MCF 10A (cell line): ENCODE measurements at regions of chr6 and their contacts with region 1.

Region 1: GRCh38 chr6:160950507-160950906 is 41.1 kb upstream of the MAP3K4 start:
- DNase-seq: peak; percentile 76
- H3K4me3 Mint-ChIP-seq: peak overlapping the region; percentile 40
- H3K27ac Mint-ChIP-seq: peak overlapping the region; percentile 88
- H3K4me1 Mint-ChIP-seq: peaks cover 27% of the 10 kb centered on the region
- H3K27me3 Mint-ChIP-seq: peaks cover under 1% of the 10 kb centered on the region
- CTCF ChIP-seq: no peak

Region 2: DNA sequence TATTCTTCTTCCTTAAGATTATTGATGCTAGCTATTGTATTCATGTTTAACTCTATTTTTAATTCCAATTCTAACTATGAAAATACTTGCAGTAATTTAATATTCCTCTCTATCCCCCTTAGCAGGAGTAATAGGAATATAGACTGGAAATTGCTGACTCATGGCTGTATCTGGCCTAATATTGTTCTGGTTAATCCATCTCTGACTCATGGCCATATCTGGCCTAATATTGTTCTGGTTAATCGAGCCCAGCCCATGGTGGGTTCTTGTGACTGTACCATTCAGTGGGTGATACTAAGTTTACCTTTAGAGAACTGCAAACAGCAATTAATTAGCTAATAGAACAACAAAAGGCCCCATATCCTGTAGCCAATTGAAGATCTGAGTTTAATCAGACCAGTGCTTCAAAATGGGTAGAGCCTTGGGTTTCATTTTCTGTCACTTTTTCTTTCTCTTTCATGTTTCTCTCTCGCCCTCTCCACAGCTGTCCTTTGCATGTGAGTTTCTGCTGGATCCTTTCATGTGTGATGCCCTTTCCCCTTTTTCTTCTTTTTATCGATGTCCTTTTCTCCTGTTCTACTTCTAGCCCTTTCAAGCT is 551.7 kb before region 1 on chr6:
- CTCF ChIA-PET with region 1: no interaction called
- POLR2A ChIA-PET with region 1: no interaction called
- intact Hi-C with region 1: no loop called
- DNase-seq: no peak
- H3K4me3 Mint-ChIP-seq: no peak overlapping the region
- H3K27ac Mint-ChIP-seq: no peak overlapping the region
- H3K4me1 Mint-ChIP-seq: peaks cover 25% of the 10 kb centered on the region
- H3K27me3 Mint-ChIP-seq: no peaks in the 10 kb centered on the region
- CTCF ChIP-seq: no peak

Region 3: DNA sequence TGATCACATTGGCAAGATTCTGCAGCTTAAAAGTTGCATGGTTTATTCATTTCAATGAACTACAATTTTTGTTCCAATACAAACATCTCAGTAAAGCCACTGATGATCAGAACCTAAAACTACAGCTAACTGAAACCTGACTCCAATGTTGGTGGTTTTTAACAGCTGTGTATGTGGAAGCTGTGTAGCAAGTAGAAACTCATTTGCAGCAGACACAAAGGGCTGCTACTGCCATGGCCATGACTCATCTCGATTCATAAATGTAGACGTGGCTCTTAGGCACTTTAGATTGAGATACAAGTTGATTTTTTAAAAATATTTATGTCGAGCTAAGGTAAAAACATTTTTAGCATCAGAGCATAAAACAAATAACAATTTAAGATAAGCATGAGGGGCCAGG is 21.6 kb after region 1 on chr6:
- CTCF ChIA-PET with region 1: interaction called, 4 read pairs
- POLR2A ChIA-PET with region 1: interaction called, 27 read pairs
- intact Hi-C with region 1: no loop called
- DNase-seq: peak; percentile 75
- H3K4me3 Mint-ChIP-seq: no peak overlapping the region
- H3K27ac Mint-ChIP-seq: no peak overlapping the region
- H3K4me1 Mint-ChIP-seq: peaks cover 17% of the 10 kb centered on the region
- H3K27me3 Mint-ChIP-seq: no peaks in the 10 kb centered on the region
- CTCF ChIP-seq: no peak

Region 4: DNA sequence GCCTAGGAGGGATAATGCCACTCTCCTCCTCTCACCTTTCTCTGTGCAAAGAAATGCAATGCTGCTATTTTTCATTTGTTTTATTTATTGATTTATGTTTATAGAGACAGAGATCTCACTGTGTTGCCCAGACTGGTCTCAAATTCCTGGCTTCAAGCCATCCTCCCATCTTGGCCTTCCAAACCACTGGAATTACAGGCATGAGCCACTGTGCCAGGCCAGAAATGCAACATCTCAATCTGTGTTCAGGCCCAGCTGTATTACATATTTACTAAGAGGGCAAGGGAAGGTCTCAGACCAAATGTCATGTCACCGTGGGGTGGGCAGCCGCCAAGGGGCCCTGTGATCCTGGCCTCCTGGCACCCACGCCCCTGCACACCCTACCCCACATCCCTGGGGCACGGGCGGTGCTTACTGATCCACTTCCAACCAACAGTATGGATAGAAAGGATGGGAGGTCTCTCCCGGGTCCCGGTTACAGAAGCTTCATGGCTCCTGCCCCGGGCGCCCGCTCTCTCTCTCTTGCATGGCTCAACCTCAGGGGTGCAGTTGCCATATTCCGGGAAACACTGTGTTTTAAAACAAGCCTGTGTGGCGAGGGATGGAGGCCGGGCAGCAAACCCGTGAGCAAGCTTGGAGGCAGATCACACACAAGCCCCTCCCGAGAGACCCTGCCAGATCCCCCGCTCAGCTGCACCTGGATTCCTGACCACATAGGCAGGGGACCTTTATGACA is 211.6 kb after region 1 on chr6:
- CTCF ChIA-PET with region 1: no interaction called
- POLR2A ChIA-PET with region 1: no interaction called
- intact Hi-C with region 1: no loop called
- DNase-seq: no peak
- H3K4me3 Mint-ChIP-seq: no peak overlapping the region
- H3K27ac Mint-ChIP-seq: no peak overlapping the region
- H3K4me1 Mint-ChIP-seq: no peaks in the 10 kb centered on the region
- H3K27me3 Mint-ChIP-seq: no peaks in the 10 kb centered on the region
- CTCF ChIP-seq: no peak

Region 5: GRCh38 chr6:161498359-161498758 is 547.9 kb after region 1 on chr6:
- CTCF ChIA-PET with region 1: no interaction called
- POLR2A ChIA-PET with region 1: no interaction called
- intact Hi-C with region 1: no loop called
- DNase-seq: peak; percentile 80
- H3K4me3 Mint-ChIP-seq: no peak overlapping the region
- H3K27ac Mint-ChIP-seq: peak overlapping the region; percentile 53
- H3K4me1 Mint-ChIP-seq: peaks cover 5% of the 10 kb centered on the region
- H3K27me3 Mint-ChIP-seq: no peaks in the 10 kb centered on the region
- CTCF ChIP-seq: peak; percentile 62